Naive thymus-derived CD4-positive, alpha-beta T cell (primary cell): ENCODE measurements at regions of chr15 and their contacts with region 1.

Region 1: DNA sequence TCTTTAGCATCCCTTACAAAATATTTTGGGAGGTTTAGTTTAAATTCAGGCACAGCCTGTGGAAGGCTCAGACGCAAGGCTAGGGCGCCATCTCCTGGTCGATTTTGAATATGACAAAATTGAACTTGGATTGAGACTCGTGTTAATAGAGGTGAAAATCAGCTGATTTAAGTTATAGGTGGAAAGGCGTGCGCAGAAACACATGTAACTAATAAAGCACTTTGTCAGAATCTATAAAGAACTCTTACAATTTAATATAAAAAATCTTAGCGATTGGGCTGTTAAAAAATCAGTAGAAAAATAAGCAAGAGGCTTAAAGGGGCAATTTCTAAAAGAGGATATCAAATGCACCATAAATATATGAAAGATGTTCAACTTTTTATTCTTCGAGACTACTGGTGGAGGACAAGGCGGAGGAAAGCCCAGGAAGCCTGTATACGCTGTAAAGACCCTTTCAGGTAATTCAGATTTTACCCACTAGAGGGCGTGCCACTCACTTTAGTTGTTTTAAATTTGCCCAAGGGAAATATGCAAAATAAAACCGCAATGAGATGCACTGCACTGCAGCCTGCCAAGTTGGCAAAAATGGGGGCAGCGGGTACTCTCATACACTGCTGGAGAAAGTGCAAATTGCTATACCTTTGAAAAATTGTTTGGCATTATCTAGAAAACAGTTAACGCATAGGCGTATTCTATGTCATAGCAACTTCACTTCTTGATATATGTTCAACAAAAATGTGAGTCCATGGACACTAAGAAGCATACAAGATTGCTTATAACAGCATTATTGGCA is 64.7 kb downstream of the SLC30A4 start:
- DNase-seq: peak; percentile 33 to 85 (median 81)
- ATAC-seq: peak; percentile 77
- H3K4me3 ChIP-seq: peak overlapping the region; percentile 58
- H3K4me3 Mint-ChIP-seq: peak overlapping the region; percentile 80 to 95 (median 90)
- H3K27ac ChIP-seq: peak overlapping the region; percentile 68
- H3K27ac Mint-ChIP-seq: peak overlapping the region; percentile 74 to 92 (median 83)
- H3K4me1 ChIP-seq: peaks cover 16 to 33% of the 10 kb centered on the region in 2 donors
- H3K4me1 Mint-ChIP-seq: peaks cover 25 to 60% (median 40%) of the 10 kb centered on the region in 7 donors
- H3K27me3 ChIP-seq: no peaks in the 10 kb centered on the region
- H3K27me3 Mint-ChIP-seq: no peaks in the 10 kb centered on the region

Region 2: DNA sequence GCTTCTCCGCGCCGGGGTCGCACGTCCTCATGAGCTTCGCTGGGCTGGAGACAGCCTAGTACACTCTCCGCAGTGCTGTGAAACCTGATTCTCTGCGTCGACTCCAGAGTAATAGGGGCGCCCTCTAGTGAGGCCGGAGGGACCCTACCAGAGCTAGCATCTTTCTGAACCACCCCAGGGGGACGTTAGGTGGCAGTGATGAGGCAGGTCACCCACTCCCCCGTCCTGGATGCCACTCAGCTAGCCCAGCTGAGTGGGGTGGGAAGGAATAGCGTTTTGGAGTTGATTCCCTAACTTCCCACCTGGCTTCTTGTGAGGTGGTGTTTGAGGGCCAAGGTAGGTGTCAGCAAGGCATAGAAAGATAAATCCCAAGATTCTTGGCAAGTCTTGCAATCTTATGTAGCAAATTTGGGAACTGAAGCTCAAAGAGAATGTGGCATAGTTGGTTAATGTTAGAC is 339.7 kb before region 1 on chr15:
- CTCF ChIA-PET with region 1: no interaction called
- POLR2A ChIA-PET with region 1: no interaction called
- intact Hi-C with region 1: loop called in 1 of 2 experiments (anchors 5 kb)
- DNase-seq: peak; percentile 64 to 86 (median 81)
- ATAC-seq: peak; percentile 99
- H3K4me3 ChIP-seq: peak overlapping the region; percentile 34
- H3K4me3 Mint-ChIP-seq: peak overlapping the region; percentile 69 to 91 (median 82)
- H3K27ac ChIP-seq: no peak overlapping the region
- H3K27ac Mint-ChIP-seq: peak overlapping the region in 1 of 9 donors; percentile 47
- H3K4me1 ChIP-seq: peaks cover 0 to 35% of the 10 kb centered on the region in 2 donors
- H3K4me1 Mint-ChIP-seq: peaks cover 19 to 42% (median 33%) of the 10 kb centered on the region in 7 donors
- H3K27me3 ChIP-seq: peaks cover 4 to 27% of the 10 kb centered on the region in 2 donors
- H3K27me3 Mint-ChIP-seq: peaks cover 50 to 82% (median 65%) of the 10 kb centered on the region in 5 donors

Region 3: DNA sequence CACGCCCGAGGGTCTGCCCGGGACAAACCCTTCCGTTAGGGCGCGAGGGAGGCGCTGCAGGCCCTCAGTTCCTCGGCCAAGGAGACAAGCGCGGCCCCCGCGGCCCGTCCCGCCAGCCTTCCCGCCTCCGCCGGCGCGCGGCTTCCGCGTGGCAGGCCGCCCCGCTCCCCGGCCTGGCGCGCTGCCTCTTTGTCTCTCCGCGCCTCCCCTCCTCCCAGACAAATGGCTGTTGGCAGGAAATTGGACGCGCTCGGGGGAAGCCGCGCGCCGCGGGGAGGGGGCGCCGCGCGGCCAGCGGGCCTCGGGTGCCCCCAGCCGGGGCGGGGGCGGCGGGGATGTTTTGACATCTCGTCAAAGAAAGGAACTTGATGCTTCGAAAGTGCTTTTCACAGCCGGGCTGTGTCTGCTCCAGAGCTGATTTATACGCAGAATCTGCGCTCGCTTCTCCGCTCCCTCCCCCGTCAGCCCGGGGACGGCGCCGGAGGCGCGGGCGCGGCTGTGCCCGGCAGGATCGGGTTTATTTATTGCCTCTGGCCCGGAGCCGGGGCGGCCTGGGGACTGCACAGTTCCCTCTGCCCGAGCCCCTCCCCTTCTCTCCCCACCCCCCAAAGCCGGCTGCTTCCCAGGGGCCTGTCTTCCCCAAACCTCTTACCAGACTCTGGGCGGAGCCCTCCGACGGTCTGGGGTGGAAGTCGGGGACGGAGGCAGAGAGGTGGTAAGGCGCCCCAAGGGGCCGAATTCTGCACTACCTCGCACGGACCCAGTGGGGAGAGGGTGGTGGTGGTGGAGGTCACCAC is 290.8 kb before region 1 on chr15:
- CTCF ChIA-PET with region 1: interaction called, 6 read pairs
- POLR2A ChIA-PET with region 1: interaction called, 3 read pairs
- intact Hi-C with region 1: loop called (anchors 1 to 2 kb)
- DNase-seq: peak; percentile 58 to 82 (median 78)
- ATAC-seq: peak; percentile 95
- H3K4me3 ChIP-seq: peak overlapping the region; percentile 70
- H3K4me3 Mint-ChIP-seq: peak overlapping the region; percentile 62 to 86 (median 74)
- H3K27ac ChIP-seq: peak overlapping the region; percentile 95
- H3K27ac Mint-ChIP-seq: peak overlapping the region; percentile 62 to 92 (median 83)
- H3K4me1 ChIP-seq: peaks cover 10 to 13% of the 10 kb centered on the region in 2 donors
- H3K4me1 Mint-ChIP-seq: peaks cover 0 to 31% (median 18%) of the 10 kb centered on the region in 7 donors
- H3K27me3 ChIP-seq: no peaks in the 10 kb centered on the region
- H3K27me3 Mint-ChIP-seq: no peaks in the 10 kb centered on the region

Region 4: DNA sequence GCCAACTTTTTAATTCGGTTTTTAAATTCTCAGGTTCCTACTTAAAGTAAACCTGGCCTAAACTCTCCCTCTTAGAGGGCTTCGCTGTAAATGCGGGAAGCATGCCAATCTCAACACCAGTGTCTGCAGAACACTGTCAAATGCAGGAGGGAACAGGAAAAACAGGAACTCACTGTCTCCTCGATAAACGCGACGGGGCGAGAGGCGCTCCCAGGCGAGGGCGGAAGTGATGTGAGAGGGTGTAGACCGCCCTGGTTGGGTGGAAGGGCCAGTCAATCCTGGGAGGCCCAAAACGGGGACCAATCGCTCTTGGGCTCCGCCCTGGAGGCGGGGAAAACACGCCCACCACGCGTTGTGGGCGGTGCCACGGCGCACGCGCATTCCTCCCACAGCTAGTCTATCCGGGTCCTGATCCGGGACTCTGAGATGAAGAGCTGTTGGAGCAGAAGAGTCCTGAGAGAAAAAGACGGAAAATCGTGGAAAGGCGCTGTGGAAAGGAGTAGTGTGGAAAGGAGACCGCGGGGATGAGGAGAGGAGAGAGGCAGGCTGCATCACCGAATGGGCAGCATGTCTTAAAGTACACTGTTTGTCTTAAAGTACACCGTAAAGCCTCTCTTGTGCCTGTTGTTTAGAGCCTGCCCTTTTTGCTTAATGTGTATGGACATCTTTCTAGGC is 178.7 kb before region 1 on chr15:
- CTCF ChIA-PET with region 1: no interaction called
- POLR2A ChIA-PET with region 1: no interaction called
- intact Hi-C with region 1: loop called (anchors 1 to 2 kb)
- DNase-seq: peak; percentile 93 to 99 (median 98)
- ATAC-seq: peak; percentile 100
- H3K4me3 ChIP-seq: peak overlapping the region; percentile 90
- H3K4me3 Mint-ChIP-seq: peak overlapping the region; percentile 90 to 99 (median 95)
- H3K27ac ChIP-seq: peak overlapping the region; percentile 84
- H3K27ac Mint-ChIP-seq: peak overlapping the region; percentile 84 to 99 (median 93)
- H3K4me1 ChIP-seq: peaks cover 9 to 12% of the 10 kb centered on the region in 2 donors
- H3K4me1 Mint-ChIP-seq: peaks cover 10 to 34% (median 23%) of the 10 kb centered on the region in 7 donors
- H3K27me3 ChIP-seq: no peaks in the 10 kb centered on the region
- H3K27me3 Mint-ChIP-seq: peaks cover 0 to 1% (median 0%) of the 10 kb centered on the region in 5 donors

Region 5: GRCh38 chr15:45391746-45392583 is 65.9 kb before region 1 on chr15:
- CTCF ChIA-PET with region 1: no interaction called
- POLR2A ChIA-PET with region 1: no interaction called
- intact Hi-C with region 1: no loop called
- DNase-seq: no peak
- ATAC-seq: peak; percentile 89
- H3K4me3 ChIP-seq: no peak overlapping the region
- H3K4me3 Mint-ChIP-seq: peak overlapping the region in 1 of 10 donors; percentile 3
- H3K27ac ChIP-seq: no peak overlapping the region
- H3K27ac Mint-ChIP-seq: no peak overlapping the region
- H3K4me1 ChIP-seq: no peaks in the 10 kb centered on the region
- H3K4me1 Mint-ChIP-seq: peaks cover 0 to 8% (median 0%) of the 10 kb centered on the region in 7 donors
- H3K27me3 ChIP-seq: no peaks in the 10 kb centered on the region
- H3K27me3 Mint-ChIP-seq: peaks cover 23 to 80% (median 45%) of the 10 kb centered on the region in 5 donors

Region 6: GRCh38 chr15:45429974-45430792 is 27.7 kb before region 1 on chr15:
- CTCF ChIA-PET with region 1: interaction called, 34 read pairs
- POLR2A ChIA-PET with region 1: interaction called, 10 read pairs
- intact Hi-C with region 1: loop called (anchors 1 kb)
- DNase-seq: peak; percentile 68 to 95 (median 83)
- ATAC-seq: peak; percentile 97
- H3K4me3 ChIP-seq: peak overlapping the region; percentile 53
- H3K4me3 Mint-ChIP-seq: peak overlapping the region in 9 of 10 donors; percentile 40 to 72 (median 62)
- H3K27ac ChIP-seq: no peak overlapping the region
- H3K27ac Mint-ChIP-seq: peak overlapping the region in 1 of 9 donors; percentile 13
- H3K4me1 ChIP-seq: no peaks in the 10 kb centered on the region
- H3K4me1 Mint-ChIP-seq: peaks cover 0 to 5% (median 1%) of the 10 kb centered on the region in 7 donors
- H3K27me3 ChIP-seq: no peaks in the 10 kb centered on the region
- H3K27me3 Mint-ChIP-seq: peaks cover 0 to 37% (median 5%) of the 10 kb centered on the region in 5 donors

Region 7: GRCh38 chr15:45510758-45511280 is 53.0 kb after region 1 on chr15:
- CTCF ChIA-PET with region 1: no interaction called
- POLR2A ChIA-PET with region 1: no interaction called
- intact Hi-C with region 1: no loop called
- DNase-seq: no peak
- ATAC-seq: no peak
- H3K4me3 ChIP-seq: no peak overlapping the region
- H3K4me3 Mint-ChIP-seq: no peak overlapping the region
- H3K27ac ChIP-seq: no peak overlapping the region
- H3K27ac Mint-ChIP-seq: no peak overlapping the region
- H3K4me1 ChIP-seq: no peaks in the 10 kb centered on the region
- H3K4me1 Mint-ChIP-seq: peaks cover 0 to 6% (median 0%) of the 10 kb centered on the region in 7 donors
- H3K27me3 ChIP-seq: no peaks in the 10 kb centered on the region
- H3K27me3 Mint-ChIP-seq: no peaks in the 10 kb centered on the region

Region 8: GRCh38 chr15:45587095-45587860 is 129.4 kb after region 1 on chr15 and contains the start of gene BLOC1S6:
- CTCF ChIA-PET with region 1: interaction called, 10 read pairs
- POLR2A ChIA-PET with region 1: interaction called, 4 read pairs
- intact Hi-C with region 1: loop called (anchors 1 kb)
- DNase-seq: peak; percentile 81 to 91 (median 87)
- ATAC-seq: peak; percentile 87
- H3K4me3 ChIP-seq: peak within 1 kb of the TSS; percentile 87
- H3K4me3 Mint-ChIP-seq: peak within 1 kb of the TSS; percentile 96 to 100 (median 98)
- H3K27ac ChIP-seq: peak within 1 kb of the TSS; percentile 97
- H3K27ac Mint-ChIP-seq: peak within 1 kb of the TSS; percentile 100
- H3K4me1 ChIP-seq: peaks cover 25 to 26% of the 10 kb centered on the region in 2 donors
- H3K4me1 Mint-ChIP-seq: peaks cover 27 to 55% (median 38%) of the 10 kb centered on the region in 7 donors
- H3K27me3 ChIP-seq: no peaks in the 10 kb centered on the region
- H3K27me3 Mint-ChIP-seq: no peaks in the 10 kb centered on the region
- total RNA-seq, gene BLOC1S6: 34.4 to 63.9 (median 50.9) TPM

Region 9: DNA sequence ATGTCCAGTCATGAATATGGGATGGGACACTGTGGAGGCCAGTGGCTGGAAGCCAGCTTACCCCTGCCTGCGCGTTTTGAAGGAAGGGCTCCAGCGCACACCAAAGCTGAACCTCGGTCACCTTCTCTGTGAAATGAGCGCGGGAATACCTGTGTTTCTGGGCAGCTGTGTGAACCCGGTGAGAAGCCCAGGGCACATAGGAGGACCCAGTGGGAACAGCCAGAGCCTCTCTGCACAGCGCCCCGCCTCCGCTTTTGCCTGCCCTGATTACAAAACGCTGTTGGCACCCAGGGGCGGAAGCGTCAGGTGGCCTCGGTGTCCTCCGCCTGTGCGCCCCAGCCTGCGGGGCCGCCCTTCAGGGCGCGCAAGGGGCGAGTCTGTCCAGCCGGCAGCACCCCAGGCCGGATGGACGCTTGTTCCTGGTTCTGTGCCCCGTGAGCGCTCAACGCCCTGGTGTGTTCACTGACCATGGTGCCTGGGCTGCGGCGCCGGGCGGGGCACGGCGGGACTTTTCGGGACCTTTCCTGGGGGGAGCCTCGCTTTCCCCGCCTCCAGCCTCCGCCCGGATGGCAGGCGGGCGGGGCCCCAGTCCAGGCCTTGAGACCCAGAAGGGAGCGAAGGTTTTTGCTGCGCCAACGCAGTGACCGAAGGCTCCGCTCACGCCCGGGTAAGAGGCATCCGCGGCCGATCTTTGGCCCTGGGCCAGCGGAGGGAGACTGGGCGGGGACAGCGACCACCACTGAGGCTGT is 176.8 kb after region 1 on chr15 and contains the start of gene SQOR:
- CTCF ChIA-PET with region 1: interaction called, 5 read pairs
- POLR2A ChIA-PET with region 1: no interaction called
- intact Hi-C with region 1: loop called (anchors 1 kb)
- DNase-seq: peak; percentile 46 to 78 (median 58)
- ATAC-seq: peak; percentile 72
- H3K4me3 ChIP-seq: peak within 1 kb of the TSS; percentile 84
- H3K4me3 Mint-ChIP-seq: peak within 1 kb of the TSS; percentile 91 to 98 (median 96)
- H3K27ac ChIP-seq: peak within 1 kb of the TSS; percentile 69
- H3K27ac Mint-ChIP-seq: peak within 1 kb of the TSS; percentile 84 to 96 (median 91)
- H3K4me1 ChIP-seq: peaks cover 24 to 27% of the 10 kb centered on the region in 2 donors
- H3K4me1 Mint-ChIP-seq: peaks cover 24 to 46% (median 42%) of the 10 kb centered on the region in 7 donors
- H3K27me3 ChIP-seq: no peaks in the 10 kb centered on the region
- H3K27me3 Mint-ChIP-seq: peaks cover 0 to 13% (median 0%) of the 10 kb centered on the region in 5 donors
- total RNA-seq, gene SQOR: 20.6 to 115 (median 32.6) TPM

Region 10: DNA sequence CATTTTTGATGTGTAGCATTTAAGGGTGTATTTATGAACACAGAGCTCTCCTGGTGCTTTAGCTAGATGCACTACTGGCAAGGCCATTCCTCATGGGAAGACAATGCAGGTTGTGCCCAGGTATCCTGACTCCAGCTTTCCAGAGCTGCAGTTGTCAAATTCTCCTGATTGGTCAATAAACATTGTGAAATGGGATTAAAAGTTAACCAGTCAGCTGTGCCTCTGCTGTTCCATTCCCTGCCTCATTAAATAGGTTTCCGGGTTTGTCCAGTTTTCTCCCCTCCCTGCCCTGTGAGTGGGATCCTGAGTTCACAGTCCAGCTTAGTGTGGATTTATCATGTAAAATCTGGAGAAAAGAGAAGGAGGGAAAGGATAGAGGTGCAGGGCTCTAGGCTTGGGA is 384.3 kb after region 1 on chr15:
- CTCF ChIA-PET with region 1: no interaction called
- POLR2A ChIA-PET with region 1: no interaction called
- intact Hi-C with region 1: no loop called
- DNase-seq: no peak
- ATAC-seq: no peak
- H3K4me3 ChIP-seq: no peak overlapping the region
- H3K4me3 Mint-ChIP-seq: no peak overlapping the region
- H3K27ac ChIP-seq: no peak overlapping the region
- H3K27ac Mint-ChIP-seq: no peak overlapping the region
- H3K4me1 ChIP-seq: no peaks in the 10 kb centered on the region
- H3K4me1 Mint-ChIP-seq: no peaks in the 10 kb centered on the region
- H3K27me3 ChIP-seq: no peaks in the 10 kb centered on the region
- H3K27me3 Mint-ChIP-seq: peaks cover 0 to 43% (median 21%) of the 10 kb centered on the region in 5 donors